Right cardiac atrium (tissue), 5 donors: ENCODE measurements at regions of chrX and their contacts with region 1.

Region 1: GRCh38 chrX:24498975-24499374 is 33.9 kb downstream of the PDK3 start:
- DNase-seq: no peak
- ATAC-seq: no peak
- H3K4me3 ChIP-seq: no peak overlapping the region
- H3K27ac ChIP-seq: no peak overlapping the region
- H3K4me1 ChIP-seq: no peaks in the 10 kb centered on the region
- H3K27me3 ChIP-seq: no peaks in the 10 kb centered on the region

Region 2: GRCh38 chrX:24395775-24396174 is 103.2 kb before region 1 on chrX:
- intact Hi-C with region 1: loop called (anchors 5 to 10 kb)
- DNase-seq: no peak
- ATAC-seq: peak; percentile 81 to 86
- H3K4me3 ChIP-seq: no peak overlapping the region
- H3K27ac ChIP-seq: no peak overlapping the region
- H3K4me1 ChIP-seq: no peaks in the 10 kb centered on the region
- H3K27me3 ChIP-seq: no peaks in the 10 kb centered on the region